ENCODE measurements at regions of chr5 and their contacts with region 1.

Region 1: DNA sequence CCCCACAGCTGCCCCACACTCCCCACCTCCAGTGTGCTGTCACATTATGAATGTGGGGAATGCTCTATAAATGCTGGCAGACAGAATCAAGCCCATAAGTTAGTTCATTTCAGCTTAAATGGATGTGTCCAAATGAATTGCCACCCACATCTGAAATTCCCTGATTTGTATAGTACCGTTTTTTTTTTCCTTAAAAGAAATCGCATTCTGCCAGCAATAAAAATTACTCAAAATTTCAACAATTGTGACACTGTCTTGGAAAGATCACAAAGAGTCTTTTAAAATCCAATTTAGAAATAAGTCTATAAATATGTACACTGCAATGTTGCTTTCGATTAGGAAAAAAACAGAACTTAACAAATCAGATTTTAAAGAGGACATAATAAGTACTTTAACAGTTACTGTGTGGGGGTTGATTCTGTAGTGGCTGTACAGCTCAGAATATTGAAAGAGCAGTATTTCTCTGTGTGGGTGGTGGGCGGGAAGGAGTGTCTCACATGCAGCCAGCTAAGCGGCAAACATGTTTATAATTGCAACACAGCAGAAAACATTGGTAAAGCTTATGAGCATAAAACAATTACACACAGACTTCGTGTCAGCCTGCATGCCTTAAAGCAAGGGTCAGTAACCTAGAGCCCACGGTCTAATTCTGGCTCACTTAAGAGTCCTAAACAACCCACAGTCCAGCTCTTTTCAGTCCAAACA is 24.9 kb upstream of the CSNK1G3 start:
- DNase-seq: peak; percentile 47
- ATAC-seq: peak; percentile 67
- H3K4me3 ChIP-seq: no peak overlapping the region
- H3K27ac ChIP-seq: no peak overlapping the region
- H3K4me1 ChIP-seq: peaks cover 5% of the 10 kb centered on the region
- H3K27me3 ChIP-seq: peaks cover 5% of the 10 kb centered on the region; the same call in 1 of the 2 replicates
- CTCF ChIP-seq: no peak
- POLR2A ChIP-seq: no peak
- RAD21 ChIP-seq: no peak

Region 2: GRCh38 chr5:125476901-125477585 is 1989.9 kb after region 1 on chr5:
- CTCF ChIA-PET with region 1: no interaction called
- POLR2A ChIA-PET with region 1: interaction called, 31 read pairs
- dilution Hi-C with region 1: no loop called
- in situ Hi-C with region 1: no loop called
- intact Hi-C with region 1: no loop called
- DNase-seq: peak; percentile 47
- ATAC-seq: peak; percentile 67
- H3K4me3 ChIP-seq: no peak overlapping the region
- H3K27ac ChIP-seq: no peak overlapping the region
- H3K4me1 ChIP-seq: peaks cover 1% of the 10 kb centered on the region; the same call in 1 of the 2 replicates
- H3K27me3 ChIP-seq: no peaks in the 10 kb centered on the region; the same call in 1 of the 2 replicates
- CTCF ChIP-seq: no peak
- POLR2A ChIP-seq: no peak
- RAD21 ChIP-seq: no peak